ENCODE measurements at regions of chr5 and their contacts with region 1.

Region 1: GRCh38 chr5:174895363-174895762 is 171.0 kb downstream of the MSX2 start:
- DNase-seq: no peak
- H3K27ac ChIP-seq: no peak overlapping the region
- CTCF ChIP-seq: no peak

Region 2: GRCh38 chr5:174945853-174946252 is 50.5 kb after region 1 on chr5:
- CTCF ChIA-PET with region 1: interaction called, 11 read pairs
- POLR2A ChIA-PET with region 1: no interaction called
- DNase-seq: no peak
- H3K27ac ChIP-seq: no peak overlapping the region
- CTCF ChIP-seq: no peak

Region 3: GRCh38 chr5:175478384-175479124 is 583.2 kb after region 1 on chr5 and contains the start of gene SFXN1:
- CTCF ChIA-PET with region 1: no interaction called
- POLR2A ChIA-PET with region 1: no interaction called
- DNase-seq: peak; percentile 94
- H3K27ac ChIP-seq: peak within 1 kb of the TSS; percentile 83
- CTCF ChIP-seq: no peak